MCF 10A (cell line): ENCODE measurements at regions of chr3 and their contacts with region 1.

Region 1: GRCh38 chr3:162285259-162285658 is 788.7 kb downstream of the OTOL1 start:
- DNase-seq: no peak
- H3K4me3 Mint-ChIP-seq: no peak overlapping the region
- H3K27ac Mint-ChIP-seq: peak overlapping the region; percentile 13
- H3K4me1 Mint-ChIP-seq: peaks cover 9% of the 10 kb centered on the region
- H3K27me3 Mint-ChIP-seq: no peaks in the 10 kb centered on the region
- CTCF ChIP-seq: no peak

Region 2: GRCh38 chr3:162626172-162626571 is 340.9 kb after region 1 on chr3:
- CTCF ChIA-PET with region 1: no interaction called
- POLR2A ChIA-PET with region 1: no interaction called
- intact Hi-C with region 1: no loop called
- DNase-seq: no peak
- H3K4me3 Mint-ChIP-seq: no peak overlapping the region
- H3K27ac Mint-ChIP-seq: no peak overlapping the region
- H3K4me1 Mint-ChIP-seq: no peaks in the 10 kb centered on the region
- H3K27me3 Mint-ChIP-seq: no peaks in the 10 kb centered on the region
- CTCF ChIP-seq: no peak

Region 3: GRCh38 chr3:163043074-163043473 is 757.8 kb after region 1 on chr3:
- CTCF ChIA-PET with region 1: no interaction called
- POLR2A ChIA-PET with region 1: no interaction called
- intact Hi-C with region 1: loop called (anchors 5 kb)
- DNase-seq: peak; percentile 25
- H3K4me3 Mint-ChIP-seq: no peak overlapping the region
- H3K27ac Mint-ChIP-seq: no peak overlapping the region
- H3K4me1 Mint-ChIP-seq: peaks cover 6% of the 10 kb centered on the region
- H3K27me3 Mint-ChIP-seq: no peaks in the 10 kb centered on the region
- CTCF ChIP-seq: no peak

Region 4: GRCh38 chr3:163490119-163490518 is 1204.9 kb after region 1 on chr3:
- CTCF ChIA-PET with region 1: no interaction called
- POLR2A ChIA-PET with region 1: no interaction called
- intact Hi-C with region 1: loop called (anchors 5 kb)
- DNase-seq: peak; percentile 76
- H3K4me3 Mint-ChIP-seq: no peak overlapping the region
- H3K27ac Mint-ChIP-seq: no peak overlapping the region
- H3K4me1 Mint-ChIP-seq: no peaks in the 10 kb centered on the region
- H3K27me3 Mint-ChIP-seq: no peaks in the 10 kb centered on the region
- CTCF ChIP-seq: peak; percentile 72